Spleen (tissue), 13 donors: ENCODE measurements at regions of chr6 and their contacts with region 1.

Region 1: DNA sequence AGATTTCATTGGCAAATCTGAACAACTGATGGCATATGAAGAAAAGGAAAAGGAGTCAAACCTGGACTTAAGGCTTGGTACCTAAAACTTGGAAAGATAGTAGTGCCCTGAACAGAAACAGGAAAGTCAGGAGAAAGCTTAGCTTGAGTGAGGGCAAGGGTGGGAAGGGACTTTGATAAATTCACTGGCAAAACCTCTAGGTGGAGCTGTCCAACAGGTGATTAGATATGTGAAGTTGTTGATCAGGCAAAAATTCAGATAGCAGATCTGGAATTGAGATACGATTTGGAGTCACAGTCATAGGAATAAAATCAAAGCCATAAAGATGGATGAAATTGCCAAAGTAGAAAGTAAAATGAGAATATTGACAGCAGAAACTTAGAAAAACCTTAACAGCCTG is 16.1 kb upstream of the ZNF292 start:
- DNase-seq: no peak
- H3K4me3 ChIP-seq: no peak overlapping the region
- H3K27ac ChIP-seq: no peak overlapping the region
- H3K4me1 ChIP-seq: peaks cover 0 to 5% (median 0%) of the 10 kb centered on the region in 6 donors
- H3K27me3 ChIP-seq: peaks cover 0 to 10% (median 0%) of the 10 kb centered on the region in 7 donors
- CTCF ChIP-seq: peak; percentile 58 to 87 (median 79)
- POLR2A ChIP-seq: no peak

Region 2: GRCh38 chr6:87237804-87238203 is 98.6 kb after region 1 on chr6:
- intact Hi-C with region 1: loop called (anchors 10 kb)
- DNase-seq: no peak
- H3K4me3 ChIP-seq: no peak overlapping the region
- H3K27ac ChIP-seq: no peak overlapping the region
- H3K4me1 ChIP-seq: no peaks in the 10 kb centered on the region
- H3K27me3 ChIP-seq: no peaks in the 10 kb centered on the region
- CTCF ChIP-seq: peak; percentile 28 to 71 (median 60)
- POLR2A ChIP-seq: no peak

Region 3: GRCh38 chr6:87375320-87375719 is 236.1 kb after region 1 on chr6:
- intact Hi-C with region 1: no loop called
- DNase-seq: no peak
- H3K4me3 ChIP-seq: no peak overlapping the region
- H3K27ac ChIP-seq: no peak overlapping the region
- H3K4me1 ChIP-seq: peaks cover 0 to 9% (median 0%) of the 10 kb centered on the region in 6 donors
- H3K27me3 ChIP-seq: no peaks in the 10 kb centered on the region
- CTCF ChIP-seq: no peak
- POLR2A ChIP-seq: no peak